Activated CD4-positive, alpha-beta memory T cell treated with anti-CD3 and anti-CD28 coated beads, Interleukin-2, amount 10 ng/mL, durations not matched to agents 7 days and 5 days (primary cell): ENCODE measurements at regions of chr16 and their contacts with region 1.

Region 1: GRCh38 chr16:69754469-69755310 is at the start of gene NOB1:
- DNase-seq: peak; percentile 97
- H3K4me3 Mint-ChIP-seq: peak within 1 kb of the TSS; percentile 100
- H3K27ac Mint-ChIP-seq: peak within 1 kb of the TSS; percentile 92
- H3K4me1 Mint-ChIP-seq: peaks cover 35% of the 10 kb centered on the region
- H3K27me3 Mint-ChIP-seq: no peaks in the 10 kb centered on the region
- total RNA-seq, gene NOB1: 60.6 to 62.5 TPM

Region 2: DNA sequence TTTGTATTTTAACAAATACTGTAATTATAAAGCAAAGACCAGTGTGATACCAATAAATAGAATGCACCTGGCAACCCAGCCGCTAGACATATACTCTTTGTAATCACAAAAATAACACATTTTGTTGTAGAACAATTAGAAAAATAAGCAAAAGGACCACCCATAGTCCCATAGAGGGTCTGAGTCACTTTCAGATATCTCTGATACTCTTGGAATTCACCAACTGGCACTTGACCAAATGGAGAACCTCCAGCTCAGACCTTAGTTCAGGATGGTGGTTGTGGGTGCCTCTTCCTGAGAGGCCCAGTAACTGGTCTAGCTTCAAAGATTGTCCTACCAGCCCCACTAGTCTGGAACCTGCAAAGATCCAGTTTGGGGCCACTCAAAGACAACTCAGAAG is 368.1 kb before region 1 on chr16:
- CTCF ChIA-PET with region 1: interaction called, 6 read pairs
- POLR2A ChIA-PET with region 1: interaction called, 11 read pairs
- DNase-seq: no peak
- H3K4me3 Mint-ChIP-seq: peak overlapping the region; percentile 93
- H3K27ac Mint-ChIP-seq: no peak overlapping the region
- H3K4me1 Mint-ChIP-seq: peaks cover 32% of the 10 kb centered on the region
- H3K27me3 Mint-ChIP-seq: no peaks in the 10 kb centered on the region

Region 3: DNA sequence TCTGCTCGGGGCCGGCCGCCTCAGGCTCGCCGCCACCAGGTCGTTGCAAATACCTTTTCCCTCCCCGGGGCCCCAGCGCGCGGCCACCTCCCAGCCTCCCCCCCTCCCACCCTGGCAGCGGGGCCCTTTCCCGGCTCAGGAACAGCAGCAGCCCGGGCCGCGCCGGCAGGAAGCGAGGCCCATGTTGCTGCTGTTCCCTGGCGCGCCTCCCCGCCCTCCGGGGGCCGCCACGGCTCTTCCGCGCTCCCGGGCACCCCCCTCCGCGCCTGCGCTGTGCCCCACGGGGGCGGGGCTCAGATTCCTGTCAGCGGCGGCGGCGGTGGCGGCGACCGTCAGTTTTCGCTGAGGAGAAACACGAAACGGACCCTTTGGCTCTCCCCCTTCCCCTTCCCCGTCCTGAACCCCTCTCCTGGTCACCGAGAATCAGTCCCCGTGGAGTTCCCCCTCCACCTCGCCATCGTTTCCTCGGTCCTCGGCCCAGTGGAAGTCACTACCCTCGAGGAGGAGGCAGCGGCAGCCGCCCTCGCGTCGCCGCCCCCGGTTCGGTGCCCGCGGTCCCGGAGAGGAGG is 188.9 kb before region 1 on chr16 and contains the start of gene NFAT5:
- CTCF ChIA-PET with region 1: interaction called, 9 read pairs
- POLR2A ChIA-PET with region 1: interaction called, 11 read pairs
- DNase-seq: peak; percentile 91
- H3K4me3 Mint-ChIP-seq: peak within 1 kb of the TSS; percentile 97
- H3K27ac Mint-ChIP-seq: peak within 1 kb of the TSS; percentile 94
- H3K4me1 Mint-ChIP-seq: peaks cover 47% of the 10 kb centered on the region
- H3K27me3 Mint-ChIP-seq: no peaks in the 10 kb centered on the region
- total RNA-seq, gene NFAT5: 19.7 to 21.3 TPM

Region 4: GRCh38 chr16:69669577-69669976 is 85.1 kb before region 1 on chr16:
- CTCF ChIA-PET with region 1: no interaction called
- POLR2A ChIA-PET with region 1: no interaction called
- DNase-seq: no peak
- H3K4me3 Mint-ChIP-seq: no peak overlapping the region
- H3K27ac Mint-ChIP-seq: no peak overlapping the region
- H3K4me1 Mint-ChIP-seq: peaks cover 3% of the 10 kb centered on the region
- H3K27me3 Mint-ChIP-seq: no peaks in the 10 kb centered on the region

Region 5: DNA sequence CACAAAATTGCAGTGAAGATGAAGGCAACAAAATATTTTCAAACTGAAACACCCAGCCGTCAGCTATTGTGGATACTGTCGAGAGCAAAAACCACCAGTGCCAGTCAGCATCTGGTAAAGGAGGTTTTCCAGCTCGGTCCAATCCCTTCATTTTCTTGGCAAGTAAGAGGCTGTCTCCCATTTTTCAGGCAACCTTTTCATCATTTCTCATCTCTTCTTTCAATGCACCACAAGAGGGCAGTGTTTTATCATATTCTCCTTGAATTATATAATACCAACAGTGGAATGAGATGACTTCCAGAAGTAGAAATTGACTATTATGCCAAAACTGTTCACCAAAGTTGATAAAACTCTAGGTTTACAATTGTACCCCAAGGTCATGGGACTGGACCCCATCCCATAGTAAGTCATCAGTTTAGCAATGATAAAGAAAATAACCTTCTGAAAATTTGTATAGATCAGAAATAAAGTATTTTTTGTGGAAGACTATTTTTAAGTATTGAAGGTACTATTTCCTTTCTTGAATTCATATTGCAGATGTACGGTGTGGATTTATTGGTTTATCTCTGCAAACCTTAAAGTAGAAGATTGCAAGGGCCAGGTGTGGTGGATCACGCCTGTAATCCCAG is 45.1 kb before region 1 on chr16:
- CTCF ChIA-PET with region 1: interaction called, 70 read pairs
- POLR2A ChIA-PET with region 1: interaction called, 12 read pairs
- DNase-seq: no peak
- H3K4me3 Mint-ChIP-seq: no peak overlapping the region
- H3K27ac Mint-ChIP-seq: no peak overlapping the region
- H3K4me1 Mint-ChIP-seq: peaks cover 3% of the 10 kb centered on the region
- H3K27me3 Mint-ChIP-seq: no peaks in the 10 kb centered on the region

Region 6: GRCh38 chr16:69732101-69732500 is 22.6 kb before region 1 on chr16:
- CTCF ChIA-PET with region 1: interaction called, 87 read pairs
- POLR2A ChIA-PET with region 1: interaction called, 84 read pairs
- DNase-seq: no peak
- H3K4me3 Mint-ChIP-seq: no peak overlapping the region
- H3K27ac Mint-ChIP-seq: no peak overlapping the region
- H3K4me1 Mint-ChIP-seq: peaks cover 15% of the 10 kb centered on the region
- H3K27me3 Mint-ChIP-seq: no peaks in the 10 kb centered on the region